ENCODE measurements at regions of chr1 and their contacts with region 1.

Region 1: DNA sequence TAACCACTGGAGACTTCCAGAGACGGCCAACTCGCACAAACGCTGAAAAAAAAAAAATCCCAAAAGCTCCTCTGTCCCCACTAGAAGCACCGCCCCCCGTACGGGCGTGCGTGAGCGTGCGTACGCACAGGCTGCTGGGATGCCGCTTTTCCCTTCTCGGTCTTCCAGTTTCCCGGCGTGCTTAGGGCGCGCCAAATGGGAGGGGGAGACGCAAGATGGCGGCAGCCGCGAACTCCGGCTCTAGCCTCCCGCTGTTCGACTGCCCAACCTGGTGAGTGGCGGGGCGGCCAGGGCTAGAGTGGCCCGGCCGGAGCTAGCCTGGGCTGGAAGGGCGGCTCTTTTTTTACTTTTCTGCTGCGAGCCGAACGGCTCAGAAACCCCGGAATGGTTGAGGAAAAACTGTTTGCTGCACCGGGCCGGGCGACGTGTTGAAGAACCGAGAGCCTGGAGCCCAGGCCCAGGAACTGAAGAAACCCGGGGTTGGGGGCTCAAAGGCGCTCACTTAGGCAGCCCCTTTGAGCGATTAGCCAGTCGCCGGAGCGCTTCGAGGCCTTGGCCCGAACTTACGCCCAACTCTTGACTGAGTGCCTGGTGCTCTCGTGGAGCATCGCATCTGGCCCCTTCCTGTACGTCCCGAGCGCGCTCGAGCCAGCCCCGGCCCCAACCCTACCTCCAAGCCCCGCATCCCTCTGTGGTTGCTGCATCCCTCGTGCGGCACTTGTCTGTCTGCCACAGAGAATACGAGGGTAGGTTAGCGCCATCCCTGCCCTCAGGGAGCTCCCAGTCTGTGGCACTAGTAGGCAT is at the start of gene PPP1R8:
- DNase-seq: peak in 1 of 2 donors; percentile 89
- H3K4me3 ChIP-seq: peak within 1 kb of the TSS; percentile 81 to 92
- H3K27ac ChIP-seq: peak within 1 kb of the TSS; percentile 85
- H3K4me1 ChIP-seq: peaks cover 35% of the 10 kb centered on the region
- H3K27me3 ChIP-seq: no peaks in the 10 kb centered on the region
- CTCF ChIP-seq: no peak
- POLR2A ChIP-seq: peak in 1 of 2 donors; percentile 49
- total RNA-seq, gene PPP1R8: 33.4 TPM

Region 2: DNA sequence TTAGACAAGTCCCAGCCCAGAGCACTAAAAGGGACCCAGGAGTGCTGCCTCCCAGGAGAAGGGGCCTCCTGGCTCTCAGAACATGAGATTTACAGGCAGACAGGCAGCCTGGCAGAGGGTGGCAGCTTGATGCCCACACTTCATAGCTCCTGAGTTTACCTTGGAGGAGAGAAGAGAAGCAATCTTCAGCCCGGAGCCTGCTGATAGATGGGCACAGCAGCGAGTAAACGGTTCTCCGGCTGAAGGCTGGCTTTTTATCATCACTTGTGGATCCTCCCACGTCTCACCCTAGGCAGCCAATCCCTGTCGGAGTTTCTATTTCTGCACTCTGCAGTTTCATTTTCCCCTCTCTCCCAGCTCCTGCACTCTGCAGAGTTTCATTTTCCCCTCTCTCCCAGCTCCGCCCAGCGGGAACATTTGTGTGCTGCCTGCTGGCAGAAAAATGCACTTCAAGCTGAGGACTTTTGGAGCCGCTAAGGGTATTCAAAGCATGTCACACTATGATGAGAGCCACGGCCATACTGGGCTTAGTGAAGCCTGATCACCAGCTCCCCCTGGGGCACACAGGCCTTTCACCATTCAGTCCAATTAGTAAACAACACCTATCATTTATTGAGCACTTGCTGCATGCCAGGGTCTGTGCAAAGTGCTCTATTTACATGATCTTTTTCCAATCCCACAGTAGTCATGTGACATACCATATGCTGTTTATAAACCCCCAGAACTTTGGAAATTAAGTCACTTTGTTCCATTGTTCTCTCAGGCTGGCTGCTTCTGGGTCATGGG is 158.7 kb before region 1 on chr1 and contains the start of gene IFI6:
- intact Hi-C with region 1: loop called (anchors 5 kb)
- DNase-seq: no peak
- H3K4me3 ChIP-seq: peak within 1 kb of the TSS; percentile 50 to 56
- H3K27ac ChIP-seq: peak within 1 kb of the TSS; percentile 93
- H3K4me1 ChIP-seq: peaks cover 37% of the 10 kb centered on the region
- H3K27me3 ChIP-seq: no peaks in the 10 kb centered on the region
- CTCF ChIP-seq: peak in 2 of 3 experiments; percentile 31 to 41
- POLR2A ChIP-seq: no peak
- total RNA-seq, gene IFI6: 28.2 TPM

Region 3: DNA sequence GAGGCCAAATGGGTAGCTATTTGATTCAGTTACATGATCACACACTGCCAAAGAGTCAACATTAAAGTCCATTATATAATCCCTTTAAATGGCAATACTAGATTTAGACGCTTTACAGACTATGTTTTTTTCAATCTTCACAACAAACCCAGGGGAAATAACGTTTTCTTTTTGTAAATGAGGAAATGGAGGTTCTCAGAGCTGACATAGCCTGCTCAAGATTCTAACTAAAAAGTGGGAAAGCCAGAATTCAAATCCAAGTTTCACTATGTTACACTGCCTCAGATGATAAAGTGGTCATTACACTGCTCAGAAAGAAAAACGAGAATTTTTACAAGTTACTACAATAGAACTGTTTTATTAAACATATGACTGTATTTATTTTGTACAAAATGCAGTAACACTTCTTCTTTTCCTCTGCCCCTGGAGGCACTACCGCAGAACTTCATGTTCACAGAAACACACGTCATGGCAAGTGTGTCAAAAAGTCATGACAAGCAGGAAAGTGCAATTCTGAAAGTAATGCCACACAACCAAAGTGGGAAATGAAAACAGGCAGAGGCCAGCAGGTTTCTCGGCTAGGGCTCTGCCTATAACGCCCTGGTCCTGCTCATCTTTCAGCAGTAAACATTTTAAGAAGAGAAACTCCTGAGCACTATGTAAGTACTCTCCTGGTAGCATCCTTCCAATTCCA is 60.5 kb after region 1 on chr1:
- intact Hi-C with region 1: no loop called
- DNase-seq: no peak
- H3K4me3 ChIP-seq: no peak overlapping the region
- H3K27ac ChIP-seq: no peak overlapping the region
- H3K4me1 ChIP-seq: no peaks in the 10 kb centered on the region
- H3K27me3 ChIP-seq: no peaks in the 10 kb centered on the region
- CTCF ChIP-seq: no peak
- POLR2A ChIP-seq: no peak

Region 4: GRCh38 chr1:28456078-28456477 is 625.3 kb after region 1 on chr1:
- intact Hi-C with region 1: no loop called
- DNase-seq: no peak
- H3K4me3 ChIP-seq: no peak overlapping the region
- H3K27ac ChIP-seq: peak overlapping the region; percentile 37
- H3K4me1 ChIP-seq: peaks cover 17% of the 10 kb centered on the region
- H3K27me3 ChIP-seq: no peaks in the 10 kb centered on the region
- CTCF ChIP-seq: no peak
- POLR2A ChIP-seq: no peak